ENCODE measurements at regions of chr6 and their contacts with region 1.

Region 1: DNA sequence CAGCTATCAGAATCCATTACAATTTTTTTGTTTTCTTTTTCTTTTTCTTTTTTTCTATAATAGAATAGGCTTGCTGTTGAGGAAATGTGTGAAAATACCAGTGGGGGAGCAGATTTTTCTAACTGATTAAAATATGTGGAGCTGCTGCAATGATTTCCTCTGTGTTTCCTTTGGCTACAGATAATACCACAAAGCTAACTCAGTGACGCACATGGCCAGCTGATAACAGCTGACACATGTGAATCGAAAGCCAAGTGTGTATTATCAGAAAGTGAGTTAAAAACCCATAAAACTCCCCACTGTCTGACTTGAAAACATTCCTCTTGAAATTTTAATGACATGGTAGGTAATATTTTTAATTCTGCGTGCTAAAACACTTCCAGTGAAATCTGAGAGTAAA is 70.8 kb upstream of the AHI1 start:
- DNase-seq: peak; percentile 51
- H3K4me3 Mint-ChIP-seq: peak overlapping the region; percentile 3
- H3K27ac Mint-ChIP-seq: peak overlapping the region; percentile 93
- H3K4me1 Mint-ChIP-seq: peaks cover 64% of the 10 kb centered on the region
- H3K27me3 Mint-ChIP-seq: no peaks in the 10 kb centered on the region

Region 2: DNA sequence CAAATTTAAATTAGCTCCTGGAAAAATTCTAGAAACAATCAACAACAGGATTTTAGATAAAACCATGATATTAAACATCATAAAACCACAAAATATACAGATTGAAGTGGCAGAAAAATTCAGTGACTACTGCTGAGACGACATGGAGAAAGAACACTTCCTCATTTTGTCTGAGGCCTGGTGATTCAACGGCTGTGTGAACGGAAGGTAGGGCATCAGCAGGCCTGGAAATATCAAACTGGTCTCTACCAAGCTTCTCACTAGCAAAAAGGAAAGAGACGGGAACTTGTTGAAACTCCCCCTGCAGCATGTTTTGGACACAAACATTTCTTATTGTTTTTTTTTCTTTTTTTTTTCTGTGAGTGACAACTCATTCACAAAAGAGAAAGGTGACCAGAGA is 12.8 kb before region 1 on chr6:
- intact Hi-C with region 1: loop called (anchors 1 kb)
- DNase-seq: no peak
- H3K4me3 Mint-ChIP-seq: no peak overlapping the region
- H3K27ac Mint-ChIP-seq: peak overlapping the region; percentile 16
- H3K4me1 Mint-ChIP-seq: peaks cover 34% of the 10 kb centered on the region
- H3K27me3 Mint-ChIP-seq: peaks cover 7% of the 10 kb centered on the region

Region 3: GRCh38 chr6:135586841-135587240 is 18.5 kb after region 1 on chr6:
- intact Hi-C with region 1: loop called (anchors 2 kb)
- DNase-seq: peak; percentile 38
- H3K4me3 Mint-ChIP-seq: peak overlapping the region; percentile 27
- H3K27ac Mint-ChIP-seq: peak overlapping the region; percentile 88
- H3K4me1 Mint-ChIP-seq: peaks cover 74% of the 10 kb centered on the region
- H3K27me3 Mint-ChIP-seq: no peaks in the 10 kb centered on the region